GM13976 (cell line): ENCODE measurements at regions of chr21 and their contacts with region 1.

Region 1: DNA sequence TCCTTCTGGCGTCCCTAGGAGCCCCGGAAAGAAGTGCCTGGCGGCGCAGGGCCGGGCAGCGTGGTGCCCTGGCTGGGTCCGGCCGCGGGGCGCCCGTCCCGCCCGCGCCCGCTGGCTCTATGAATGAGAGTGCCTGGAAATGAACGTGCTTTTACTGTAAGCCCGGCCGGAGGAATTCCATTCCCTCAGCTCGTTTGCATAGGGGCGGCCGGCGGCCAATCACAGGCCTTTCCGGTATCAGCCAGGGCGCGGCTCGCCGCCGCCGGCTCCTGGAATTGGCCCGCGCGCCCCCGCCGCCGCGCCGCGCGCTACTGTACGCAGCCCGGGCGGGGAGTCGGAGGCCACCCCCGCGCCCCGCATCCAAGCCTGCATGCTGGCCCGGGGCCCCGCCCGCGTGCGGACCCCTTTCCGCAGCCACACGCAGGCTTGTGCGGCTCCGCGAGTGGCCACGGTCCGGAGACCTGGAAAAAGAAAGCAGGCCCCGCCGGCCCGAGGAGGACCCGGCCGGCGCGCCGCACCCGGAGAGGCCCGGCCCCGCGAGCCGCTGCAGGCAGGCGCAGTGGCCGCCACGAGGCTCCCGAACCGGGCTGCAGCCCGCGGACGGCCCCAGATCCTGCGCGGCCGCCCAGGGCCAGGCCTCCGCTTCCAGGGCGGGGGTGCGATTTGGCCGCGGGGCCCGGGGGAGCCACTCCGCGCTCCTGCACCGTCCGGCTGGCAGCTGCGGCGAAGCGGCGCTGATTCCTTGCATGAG is 160.4 kb downstream of the RUNX1 start:
- DNase-seq: peak; percentile 87
- CTCF ChIP-seq: no peak

Region 2: DNA sequence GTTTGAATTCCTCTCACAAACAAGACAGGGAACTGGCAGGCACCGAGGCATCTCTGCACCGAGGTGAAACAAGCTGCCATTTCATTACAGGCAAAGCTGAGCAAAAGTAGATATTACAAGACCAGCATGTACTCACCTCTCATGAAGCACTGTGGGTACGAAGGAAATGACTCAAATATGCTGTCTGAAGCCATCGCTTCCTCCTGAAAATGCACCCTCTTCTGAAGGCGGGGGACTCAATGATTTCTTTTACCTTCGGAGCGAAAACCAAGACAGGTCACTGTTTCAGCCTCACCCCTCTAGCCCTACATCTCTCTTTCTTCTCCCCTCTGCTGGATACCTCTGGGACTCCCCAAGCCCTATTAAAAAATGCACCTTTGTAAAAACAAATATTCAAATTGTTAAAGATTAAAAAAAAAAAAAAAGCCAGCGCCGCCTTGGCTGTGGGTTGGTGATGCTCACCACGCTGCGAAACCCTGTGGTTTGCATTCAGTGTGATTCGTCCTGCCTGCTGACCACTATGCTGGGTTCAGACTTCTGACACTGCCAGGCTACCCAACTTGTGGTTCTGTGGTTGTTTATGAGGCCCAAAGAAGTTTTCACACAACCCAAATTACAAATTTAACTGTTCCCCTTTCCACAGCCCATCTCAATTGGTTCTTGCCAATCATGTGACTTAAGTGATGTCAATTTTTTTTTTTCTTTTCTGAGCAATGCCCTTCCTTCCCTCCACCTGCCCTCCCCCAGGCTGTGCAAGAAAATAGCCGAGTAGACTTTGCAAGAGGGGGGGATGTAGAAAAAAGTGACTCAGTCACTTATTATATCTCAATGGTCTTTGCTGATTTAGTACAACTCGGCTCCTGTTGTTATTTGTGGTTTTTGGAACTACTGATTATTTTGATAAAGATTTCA is 160.2 kb after region 1 on chr21 and contains the start of gene RUNX1:
- in situ Hi-C with region 1: loop called (anchors 10 kb)
- DNase-seq: peak; percentile 72
- CTCF ChIP-seq: no peak

Region 3: GRCh38 chr21:35400233-35400957 is 511.7 kb after region 1 on chr21:
- in situ Hi-C with region 1: loop called (anchors 10 kb)
- DNase-seq: peak; percentile 69
- CTCF ChIP-seq: peak; percentile 55